ENCODE measurements at regions of chr4 and their contacts with region 1.

Region 1: GRCh38 chr4:52028969-52029368 is 8.8 kb upstream of the LRRC66 start:
- DNase-seq: no peak
- H3K4me3 Mint-ChIP-seq: no peak overlapping the region
- H3K27ac Mint-ChIP-seq: no peak overlapping the region
- H3K4me1 Mint-ChIP-seq: no peaks in the 10 kb centered on the region
- H3K27me3 Mint-ChIP-seq: no peaks in the 10 kb centered on the region

Region 2: DNA sequence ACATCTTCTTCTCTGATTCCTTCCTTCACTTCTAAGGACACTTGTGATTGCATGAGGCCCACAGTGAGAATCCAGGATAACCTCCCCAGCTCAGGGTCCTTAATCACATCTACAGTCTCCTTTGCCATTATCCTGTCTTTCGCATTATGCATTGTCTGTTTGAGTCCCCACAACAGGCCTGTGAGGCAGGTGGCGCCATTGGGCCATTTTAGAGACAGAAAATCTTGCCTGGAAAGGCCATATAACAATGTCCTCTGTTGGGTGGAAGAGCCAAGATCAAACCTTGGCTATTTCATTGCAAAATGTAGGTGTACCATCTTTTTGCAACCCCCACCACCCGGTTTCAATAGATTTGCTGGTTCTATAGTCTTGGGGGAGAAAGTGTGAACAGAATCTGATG is 197.8 kb before region 1 on chr4:
- intact Hi-C with region 1: loop called (anchors 1 kb)
- DNase-seq: peak; percentile 27
- H3K4me3 Mint-ChIP-seq: no peak overlapping the region
- H3K27ac Mint-ChIP-seq: no peak overlapping the region
- H3K4me1 Mint-ChIP-seq: no peaks in the 10 kb centered on the region
- H3K27me3 Mint-ChIP-seq: no peaks in the 10 kb centered on the region

Region 3: GRCh38 chr4:51895813-51896408 is 133.1 kb before region 1 on chr4:
- intact Hi-C with region 1: loop called (anchors 5 kb)
- DNase-seq: peak; percentile 29
- H3K4me3 Mint-ChIP-seq: no peak overlapping the region
- H3K27ac Mint-ChIP-seq: peak overlapping the region; percentile 35
- H3K4me1 Mint-ChIP-seq: peaks cover 15% of the 10 kb centered on the region
- H3K27me3 Mint-ChIP-seq: no peaks in the 10 kb centered on the region